RWPE1 (cell line): ENCODE measurements at regions of chr2 and their contacts with region 1.

Region 1: DNA sequence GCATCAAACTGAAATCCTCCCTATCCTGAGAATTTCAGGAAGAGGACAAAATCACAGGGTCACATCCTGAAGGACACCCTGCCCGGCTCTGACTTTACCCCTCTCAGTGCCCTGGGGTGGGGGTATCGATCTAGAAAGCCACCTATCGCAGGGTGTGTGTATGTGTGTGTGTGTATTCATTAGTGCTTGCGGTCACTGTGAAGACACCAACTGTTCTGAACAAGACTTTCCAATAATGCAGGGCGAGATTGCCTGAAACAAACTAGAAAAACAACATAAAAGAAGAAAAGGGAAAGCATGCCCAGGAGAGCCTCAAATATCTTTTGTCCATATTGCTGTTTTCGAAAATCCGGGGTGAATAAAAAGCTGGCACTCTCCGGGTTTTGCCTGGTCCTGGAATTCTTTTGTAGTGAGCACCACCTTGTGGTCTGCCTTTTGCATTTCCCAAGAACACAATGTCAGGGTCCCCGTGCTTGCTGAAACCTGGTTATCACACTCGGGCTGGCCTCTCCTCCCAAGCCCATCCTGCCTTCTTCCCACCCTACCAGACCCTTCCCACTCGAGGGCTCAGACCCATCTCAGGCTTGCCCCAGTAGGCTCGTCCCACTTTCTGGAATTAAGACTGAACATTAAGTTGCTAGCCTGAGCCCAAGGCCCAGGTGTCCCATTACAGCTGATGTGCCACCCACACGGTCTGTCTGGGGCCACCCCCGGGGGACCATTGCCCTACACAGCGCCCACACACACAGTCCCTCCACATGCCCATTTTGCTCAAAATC is 25.0 kb upstream of the COPS8 start:
- DNase-seq: peak; percentile 59
- H3K27ac ChIP-seq: no peak overlapping the region
- CTCF ChIP-seq: peak; percentile 68

Region 2: GRCh38 chr2:236352761-236353593 is 707.7 kb before region 1 on chr2:
- CTCF ChIA-PET with region 1: interaction called, 13 read pairs
- POLR2A ChIA-PET with region 1: no interaction called
- DNase-seq: peak; percentile 26
- H3K27ac ChIP-seq: no peak overlapping the region
- CTCF ChIP-seq: peak; percentile 86